Activated CD4-positive, alpha-beta T cell treated with anti-CD3 and anti-CD28 coated beads for 36 hours (primary cell): ENCODE measurements at regions of chr11 and their contacts with region 1.

Region 1: DNA sequence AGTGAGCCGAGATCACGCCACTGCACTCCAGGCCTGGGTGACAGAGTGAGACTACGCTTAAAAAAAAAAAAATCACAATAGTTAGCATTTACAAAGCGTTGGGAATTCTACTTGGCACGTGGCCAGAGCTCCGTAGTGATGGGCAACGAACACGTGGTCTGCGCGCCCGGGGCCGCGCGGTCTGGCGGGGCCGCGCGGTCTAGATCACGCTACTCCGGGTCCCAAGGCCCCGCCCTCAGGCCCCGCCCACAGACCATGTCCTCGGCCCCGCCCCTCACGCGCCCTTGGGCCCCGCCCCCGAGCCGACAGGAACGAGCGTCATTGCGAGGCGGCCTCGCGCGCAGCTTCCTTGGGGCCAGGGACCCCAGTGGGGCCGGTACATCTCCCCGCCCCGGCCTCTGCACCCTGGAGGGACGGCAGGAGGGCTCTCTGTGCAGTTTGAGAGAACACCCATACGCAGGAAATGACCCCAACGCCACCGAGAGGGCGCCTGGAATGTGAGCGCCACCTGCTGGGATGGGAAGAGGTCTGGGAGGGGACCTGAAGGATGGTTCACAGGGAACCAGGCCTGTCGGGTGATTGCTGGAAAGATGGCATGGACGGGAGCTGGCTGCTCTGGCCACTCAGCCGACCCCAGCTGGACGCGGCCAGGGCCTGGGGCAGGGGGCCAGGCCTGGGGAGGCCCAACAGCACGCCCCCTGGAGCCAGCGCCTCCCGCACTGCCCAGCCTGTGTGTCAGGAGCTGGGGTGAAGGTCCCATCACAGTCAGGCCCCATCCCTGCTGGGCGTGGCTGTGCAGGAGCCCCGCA is 2.0 kb upstream of the PTDSS2 start:
- DNase-seq: peak; percentile 99
- ATAC-seq: peak; percentile 79
- H3K4me3 Mint-ChIP-seq: peak overlapping the region; percentile 86
- H3K27ac Mint-ChIP-seq: peak overlapping the region; percentile 93
- H3K4me1 Mint-ChIP-seq: peaks cover 16% of the 10 kb centered on the region
- H3K27me3 Mint-ChIP-seq: peaks cover 3% of the 10 kb centered on the region

Region 2: DNA sequence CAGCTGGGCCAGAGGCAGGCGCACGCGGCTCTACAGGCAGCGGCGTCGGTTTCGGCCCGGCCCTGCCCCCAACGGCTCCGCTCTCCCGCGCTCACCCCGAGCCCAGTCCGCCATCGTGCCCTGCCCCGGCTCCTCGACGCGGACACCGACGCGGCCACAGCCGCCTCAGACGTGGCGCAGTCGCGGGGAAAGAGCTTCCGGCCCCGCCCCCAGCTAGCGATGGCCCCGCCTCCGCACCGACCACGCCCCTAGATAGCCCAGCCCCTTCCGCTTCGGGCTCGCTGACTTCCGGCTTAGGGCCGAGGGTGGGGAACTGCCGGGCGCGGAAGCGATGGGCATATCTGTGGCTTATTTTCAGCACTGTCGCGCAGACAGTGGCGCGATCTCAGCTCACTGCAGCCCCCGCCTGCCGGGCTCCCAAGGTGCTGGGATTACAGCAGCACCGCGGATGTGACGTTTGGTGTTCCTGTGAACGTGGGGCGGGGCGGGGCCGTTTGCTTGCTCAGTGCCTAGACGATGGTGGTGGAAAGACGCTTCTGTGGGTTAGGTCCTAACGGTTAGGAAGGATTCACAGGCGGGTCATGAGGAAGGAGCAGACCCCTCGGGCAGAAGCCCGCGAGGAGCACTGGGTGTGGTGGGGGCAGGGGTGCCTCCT is 240.8 kb before region 1 on chr11 and contains the starts of genes BET1L and RIC8A:
- CTCF ChIA-PET with region 1: interaction called, 7 read pairs
- POLR2A ChIA-PET with region 1: no interaction called
- intact Hi-C with region 1: loop called (anchors 1 to 5 kb)
- DNase-seq: peak; percentile 99
- ATAC-seq: peak; percentile 89
- H3K4me3 Mint-ChIP-seq: peak within 1 kb of the TSS; percentile 94
- H3K27ac Mint-ChIP-seq: peak within 1 kb of the TSS; percentile 99
- H3K4me1 Mint-ChIP-seq: peaks cover 56% of the 10 kb centered on the region
- H3K27me3 Mint-ChIP-seq: no peaks in the 10 kb centered on the region
- total RNA-seq, gene BET1L: 45.5 to 49.4 TPM
- total RNA-seq, gene RIC8A: 104 to 124 TPM

Region 3: DNA sequence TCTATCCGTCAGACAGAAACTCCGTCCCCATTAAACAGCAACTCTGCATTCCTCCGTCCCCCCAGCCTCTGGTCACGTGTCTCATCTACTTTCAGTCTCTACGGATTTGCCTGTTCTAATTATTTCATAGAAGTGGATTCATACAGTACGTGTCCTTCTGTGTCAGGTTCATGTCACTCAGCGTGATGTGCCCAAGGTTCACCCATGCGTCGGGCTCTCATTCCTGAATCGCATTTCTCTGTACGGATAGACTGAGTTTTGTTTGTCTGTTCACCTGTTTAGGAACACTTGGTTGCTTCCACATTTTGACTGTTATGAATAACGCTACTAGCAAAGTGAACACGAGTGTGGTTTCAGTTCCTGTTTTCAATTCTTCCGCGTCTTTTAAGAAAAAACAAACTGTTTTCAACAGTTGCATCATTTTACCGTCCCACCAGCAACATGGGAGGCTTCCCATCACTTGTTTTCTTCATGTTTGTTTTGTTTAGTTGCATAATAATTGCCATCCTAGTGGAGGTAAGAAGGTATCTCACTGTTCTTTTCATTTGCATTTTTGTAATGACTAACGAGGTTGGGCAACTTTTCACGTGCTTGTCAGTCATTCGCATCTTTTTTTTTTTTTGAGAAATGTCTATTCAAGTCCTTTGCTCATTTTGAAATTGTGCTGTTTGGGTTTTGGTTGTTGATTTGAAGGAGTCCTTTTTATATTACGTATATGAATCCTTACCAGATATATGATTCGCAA is 178.8 kb before region 1 on chr11:
- CTCF ChIA-PET with region 1: no interaction called
- POLR2A ChIA-PET with region 1: no interaction called
- intact Hi-C with region 1: loop called in 1 of 2 experiments (anchors 1 kb)
- DNase-seq: peak; percentile 72
- ATAC-seq: peak; percentile 71
- H3K4me3 Mint-ChIP-seq: peak overlapping the region; percentile 79
- H3K27ac Mint-ChIP-seq: peak overlapping the region; percentile 99
- H3K4me1 Mint-ChIP-seq: peaks cover 43% of the 10 kb centered on the region
- H3K27me3 Mint-ChIP-seq: no peaks in the 10 kb centered on the region

Region 4: DNA sequence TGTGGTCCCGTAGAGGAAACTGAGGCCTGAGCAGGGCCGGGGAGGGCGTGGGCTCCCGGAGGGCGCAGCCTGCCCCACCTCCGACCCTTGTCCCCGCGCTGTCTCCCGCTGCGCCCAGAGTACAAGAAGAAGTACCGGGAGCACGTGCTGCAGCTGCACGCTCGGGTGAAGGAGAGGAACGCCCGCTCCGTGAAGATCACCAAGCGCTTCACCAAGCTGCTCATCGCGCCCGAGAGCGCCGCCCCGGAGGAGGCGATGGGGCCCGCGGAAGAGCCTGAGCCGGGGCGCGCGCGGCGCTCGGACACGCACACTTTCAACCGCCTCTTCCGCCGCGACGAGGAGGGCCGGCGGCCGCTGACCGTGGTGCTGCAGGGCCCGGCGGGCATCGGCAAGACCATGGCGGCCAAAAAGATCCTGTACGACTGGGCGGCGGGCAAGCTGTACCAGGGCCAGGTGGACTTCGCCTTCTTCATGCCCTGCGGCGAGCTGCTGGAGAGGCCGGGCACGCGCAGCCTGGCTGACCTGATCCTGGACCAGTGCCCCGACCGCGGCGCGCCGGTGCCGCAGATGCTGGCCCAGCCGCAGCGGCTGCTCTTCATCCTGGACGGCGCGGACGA is 168.1 kb before region 1 on chr11:
- CTCF ChIA-PET with region 1: no interaction called
- POLR2A ChIA-PET with region 1: no interaction called
- intact Hi-C with region 1: no loop called
- DNase-seq: peak; percentile 72
- ATAC-seq: peak; percentile 69
- H3K4me3 Mint-ChIP-seq: peak overlapping the region; percentile 58
- H3K27ac Mint-ChIP-seq: no peak overlapping the region
- H3K4me1 Mint-ChIP-seq: peaks cover 44% of the 10 kb centered on the region
- H3K27me3 Mint-ChIP-seq: peaks cover 21% of the 10 kb centered on the region

Region 5: DNA sequence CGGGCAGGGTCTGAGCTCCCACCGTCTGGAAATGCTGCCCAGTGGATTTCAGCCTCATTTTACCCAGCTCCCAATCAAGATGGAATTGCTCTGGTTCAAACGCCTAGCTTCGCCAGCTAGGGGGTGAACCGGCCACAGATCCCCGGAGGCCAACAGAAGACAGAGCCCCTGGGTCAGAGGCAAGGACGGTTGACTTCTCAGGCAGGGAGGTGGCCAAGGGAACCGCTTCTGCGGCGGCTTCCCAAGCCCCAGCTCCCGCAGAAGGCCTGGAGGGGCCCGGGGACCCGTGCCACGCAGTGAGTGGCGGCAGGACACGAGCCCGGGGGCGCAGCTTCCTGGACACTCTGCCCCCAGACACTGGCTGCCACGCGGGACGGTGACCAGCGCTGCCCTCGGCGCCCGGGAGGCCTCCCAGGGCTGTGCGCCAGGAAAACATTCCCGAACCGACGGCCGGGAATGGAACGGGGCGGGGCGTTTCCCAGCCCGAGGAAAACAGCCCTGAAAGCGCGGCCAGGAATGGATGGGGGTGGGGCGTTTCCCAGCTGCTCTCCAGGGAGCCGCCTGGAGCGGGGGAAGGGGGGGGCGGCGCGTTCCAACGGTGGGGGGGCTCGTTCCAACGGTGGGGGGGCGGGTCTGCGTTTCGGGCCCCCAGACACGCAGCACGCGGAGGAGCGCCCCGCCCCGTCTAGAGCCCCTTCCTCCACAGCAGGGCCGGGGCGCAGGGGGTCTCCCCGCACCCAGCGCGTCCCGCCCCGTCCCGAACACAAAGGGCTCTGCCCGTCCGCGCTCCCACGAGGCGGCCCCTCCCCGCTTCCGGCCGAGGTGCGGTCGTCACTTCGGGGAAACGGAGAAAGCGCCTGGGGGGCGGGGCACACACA is 92.3 kb before region 1 on chr11:
- CTCF ChIA-PET with region 1: interaction called, 5 read pairs
- POLR2A ChIA-PET with region 1: interaction called, 4 read pairs
- intact Hi-C with region 1: loop called in 1 of 2 experiments (anchors 2 kb)
- DNase-seq: peak; percentile 94
- ATAC-seq: peak; percentile 63
- H3K4me3 Mint-ChIP-seq: no peak overlapping the region
- H3K27ac Mint-ChIP-seq: peak overlapping the region; percentile 96
- H3K4me1 Mint-ChIP-seq: peaks cover 47% of the 10 kb centered on the region
- H3K27me3 Mint-ChIP-seq: no peaks in the 10 kb centered on the region

Region 6: DNA sequence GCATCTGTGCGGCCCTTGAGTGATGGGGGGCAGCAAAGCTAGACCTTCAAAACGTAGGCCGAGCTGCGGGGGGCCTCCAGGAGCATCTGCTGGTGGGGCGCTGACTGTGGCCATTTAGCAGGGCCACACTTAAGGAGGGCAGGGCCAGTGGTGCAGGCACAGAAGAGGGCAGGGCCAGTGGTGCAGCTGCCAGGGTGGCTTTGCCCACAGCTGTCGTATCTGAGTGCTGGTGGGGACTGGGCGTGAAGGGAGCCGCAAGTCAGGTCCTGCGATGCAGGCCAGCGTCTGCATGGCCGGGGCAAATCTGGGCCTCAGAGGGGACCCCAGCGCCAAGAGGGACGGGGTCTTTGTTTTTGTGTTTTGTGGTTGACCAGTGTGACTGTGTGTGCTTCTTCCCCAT is 31.2 kb after region 1 on chr11:
- CTCF ChIA-PET with region 1: no interaction called
- POLR2A ChIA-PET with region 1: no interaction called
- intact Hi-C with region 1: no loop called
- DNase-seq: no peak
- ATAC-seq: no peak
- H3K4me3 Mint-ChIP-seq: no peak overlapping the region
- H3K27ac Mint-ChIP-seq: no peak overlapping the region
- H3K4me1 Mint-ChIP-seq: no peaks in the 10 kb centered on the region
- H3K27me3 Mint-ChIP-seq: no peaks in the 10 kb centered on the region

Region 7: DNA sequence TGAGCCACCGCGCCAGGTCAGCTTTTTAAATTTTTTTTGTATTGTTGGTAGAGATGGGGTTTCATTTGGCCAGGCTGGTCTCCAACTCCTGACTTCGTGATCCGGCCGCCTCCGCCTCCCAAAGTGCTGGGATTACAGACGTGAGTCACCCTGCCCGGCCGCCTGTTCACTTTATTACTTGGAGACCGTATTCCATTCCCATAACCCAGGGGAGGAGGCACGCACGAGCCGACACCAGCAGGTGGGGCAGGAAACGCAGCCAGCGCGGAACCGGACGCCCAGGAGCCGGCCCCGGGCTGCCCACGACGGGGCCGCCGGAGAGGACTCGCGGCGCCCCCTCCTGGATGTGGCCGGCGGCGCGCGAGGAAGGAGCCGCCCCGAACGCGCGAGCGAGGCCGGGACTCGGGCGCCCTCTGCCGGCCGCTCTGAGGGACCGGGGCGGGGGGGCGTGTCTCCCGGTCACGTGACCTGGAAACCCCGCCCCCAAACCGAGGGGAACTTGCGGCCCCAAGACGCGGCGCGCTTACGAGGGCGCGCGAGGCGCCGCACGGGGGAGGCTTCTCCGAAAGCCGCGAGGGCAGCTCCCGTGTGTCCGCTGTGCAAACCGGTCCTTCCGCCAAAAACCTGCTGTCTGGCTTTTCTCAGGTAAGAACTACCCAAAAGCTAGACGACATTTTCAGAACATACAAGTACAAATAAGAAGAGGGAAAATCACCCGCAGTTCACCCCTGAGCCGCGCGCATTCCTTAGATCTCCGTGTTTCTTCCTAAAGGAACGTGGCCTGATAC is 70.5 kb after region 1 on chr11:
- CTCF ChIA-PET with region 1: interaction called, 6 read pairs
- POLR2A ChIA-PET with region 1: no interaction called
- intact Hi-C with region 1: loop called in 1 of 2 experiments (anchors 1 kb)
- DNase-seq: peak; percentile 94
- ATAC-seq: peak; percentile 95
- H3K4me3 Mint-ChIP-seq: peak overlapping the region; percentile 67
- H3K27ac Mint-ChIP-seq: peak overlapping the region; percentile 85
- H3K4me1 Mint-ChIP-seq: peaks cover 3% of the 10 kb centered on the region
- H3K27me3 Mint-ChIP-seq: no peaks in the 10 kb centered on the region

Region 8: DNA sequence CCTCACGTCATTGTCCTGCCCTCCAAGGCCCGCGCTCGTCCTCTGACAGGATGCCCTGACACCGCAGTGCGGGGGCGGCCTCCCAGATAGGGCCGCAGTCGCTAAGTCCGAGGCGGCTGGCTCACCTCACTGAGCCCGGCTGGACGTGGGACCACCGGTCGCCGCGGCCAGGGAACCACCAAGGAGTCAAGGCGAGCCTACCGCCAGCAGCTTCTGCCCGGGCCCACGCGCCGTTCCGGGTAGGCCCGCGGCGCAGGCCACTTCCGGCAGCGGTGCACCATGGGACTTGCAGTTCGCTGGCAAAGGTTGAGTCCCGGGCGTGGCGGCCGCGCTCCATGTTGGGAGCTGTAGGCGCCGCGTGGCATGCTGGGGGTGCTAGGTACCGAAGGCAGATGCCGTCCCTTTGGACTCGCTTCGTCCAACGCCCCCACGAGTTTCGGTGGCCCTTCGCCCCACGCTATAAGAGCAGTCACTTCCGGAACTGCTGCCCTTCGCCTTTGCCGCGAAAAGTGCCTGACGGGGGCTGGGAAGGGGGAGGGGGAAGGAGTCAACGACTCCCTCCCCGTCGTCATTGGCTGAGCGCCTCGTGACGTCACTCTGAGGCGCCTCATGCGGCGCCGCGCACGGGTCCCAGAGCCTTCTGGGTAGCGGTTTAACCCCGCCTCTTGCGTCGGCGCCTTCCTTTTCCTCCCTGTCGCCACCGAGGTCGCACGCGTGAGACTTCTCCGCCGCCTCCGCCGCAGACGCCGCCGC is 361.3 kb after region 1 on chr11 and contains the start of gene RPLP2:
- CTCF ChIA-PET with region 1: no interaction called
- POLR2A ChIA-PET with region 1: no interaction called
- intact Hi-C with region 1: loop called in 1 of 2 experiments (anchors 1 kb)
- DNase-seq: peak; percentile 99
- ATAC-seq: peak; percentile 86
- H3K4me3 Mint-ChIP-seq: peak within 1 kb of the TSS; percentile 94
- H3K27ac Mint-ChIP-seq: peak within 1 kb of the TSS; percentile 97
- H3K4me1 Mint-ChIP-seq: peaks cover 30% of the 10 kb centered on the region
- H3K27me3 Mint-ChIP-seq: no peaks in the 10 kb centered on the region
- total RNA-seq, gene RPLP2: 2,132 to 3,230 TPM